ENCODE measurements at regions of chr4 and their contacts with region 1.

Region 1: DNA sequence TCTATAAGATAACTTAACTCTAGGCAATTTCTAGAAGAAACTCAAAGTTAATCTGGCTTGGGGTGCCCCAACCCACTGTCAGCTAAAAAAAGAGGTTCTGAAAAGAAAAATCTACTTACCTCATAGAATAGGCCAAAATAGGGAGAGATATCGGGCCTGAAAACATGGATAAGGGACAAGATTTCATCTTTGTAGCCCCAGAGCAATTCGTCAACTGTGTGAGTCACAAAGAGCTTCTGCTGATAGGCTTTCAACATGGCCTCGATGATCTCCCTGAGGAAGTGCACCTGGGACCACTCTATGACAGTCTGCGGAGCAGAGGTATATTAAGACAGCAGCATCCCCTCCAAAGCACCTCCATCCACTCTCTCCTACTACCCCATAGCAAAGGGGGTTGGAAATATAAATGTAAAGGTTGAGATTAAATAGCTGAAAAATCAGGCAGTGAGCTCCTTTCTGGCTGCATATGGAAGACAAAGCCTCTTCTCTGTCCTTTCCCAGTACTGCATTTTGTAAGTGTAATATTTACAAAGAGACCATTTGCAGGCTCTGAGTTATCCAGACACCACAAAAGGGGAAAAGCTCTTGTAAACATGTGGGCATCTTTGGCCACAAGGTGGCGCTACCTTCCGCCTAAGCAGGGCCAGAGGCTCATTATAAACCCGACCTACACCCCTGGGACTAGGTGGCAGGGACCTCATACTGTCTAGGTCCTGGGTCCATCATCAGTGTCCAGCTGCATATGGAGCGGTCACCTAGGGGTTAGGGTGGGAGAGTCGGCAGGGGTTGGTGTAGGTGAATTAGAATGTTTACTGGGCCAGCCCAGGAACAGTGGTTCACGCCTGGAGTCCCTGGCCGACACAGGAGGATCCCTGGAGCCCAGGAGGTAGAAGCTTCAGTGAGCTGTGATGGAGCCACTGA is 31.5 kb upstream of the NUP54 start:
- DNase-seq: peak; percentile 62
- ATAC-seq: peak; percentile 79
- H3K4me3 Mint-ChIP-seq: no peak overlapping the region
- H3K27ac Mint-ChIP-seq: no peak overlapping the region
- H3K4me1 Mint-ChIP-seq: peaks cover 5% of the 10 kb centered on the region
- H3K27me3 Mint-ChIP-seq: no peaks in the 10 kb centered on the region
- CTCF ChIP-seq: peak; percentile 76

Region 2: DNA sequence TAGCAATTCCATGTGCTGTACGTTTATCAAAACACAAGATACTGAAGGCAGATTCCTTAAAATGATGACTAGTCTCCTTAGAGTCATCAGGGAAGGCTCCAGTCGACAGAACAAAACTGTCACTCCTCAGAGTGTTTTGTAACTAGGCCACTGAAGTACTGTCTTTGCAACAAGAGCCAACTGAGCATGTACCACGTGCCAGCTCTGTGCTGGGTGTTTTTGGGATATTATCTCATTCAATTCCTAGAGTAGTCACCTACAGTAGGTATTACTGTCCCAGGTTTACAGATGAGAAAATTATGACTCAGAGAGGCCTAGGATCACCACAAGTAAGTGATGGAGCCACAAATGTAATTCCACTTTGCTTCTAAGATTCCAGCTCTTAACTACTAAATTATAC is 13.2 kb before region 1 on chr4:
- CTCF ChIA-PET with region 1: interaction called, 10 read pairs
- POLR2A ChIA-PET with region 1: no interaction called
- intact Hi-C with region 1: no loop called
- DNase-seq: no peak
- ATAC-seq: no peak
- H3K4me3 Mint-ChIP-seq: no peak overlapping the region
- H3K27ac Mint-ChIP-seq: no peak overlapping the region
- H3K4me1 Mint-ChIP-seq: no peaks in the 10 kb centered on the region
- H3K27me3 Mint-ChIP-seq: no peaks in the 10 kb centered on the region
- CTCF ChIP-seq: no peak

Region 3: GRCh38 chr4:76213415-76214176 is 33.9 kb after region 1 on chr4 and contains the start of gene SCARB2:
- CTCF ChIA-PET with region 1: interaction called, 11 read pairs
- POLR2A ChIA-PET with region 1: no interaction called
- intact Hi-C with region 1: loop called (anchors 2 kb)
- DNase-seq: peak; percentile 83
- ATAC-seq: peak; percentile 80
- H3K4me3 Mint-ChIP-seq: peak within 1 kb of the TSS; percentile 91
- H3K27ac Mint-ChIP-seq: peak within 1 kb of the TSS; percentile 90
- H3K4me1 Mint-ChIP-seq: peaks cover 51% of the 10 kb centered on the region
- H3K27me3 Mint-ChIP-seq: no peaks in the 10 kb centered on the region
- CTCF ChIP-seq: no peak
- total RNA-seq, gene SCARB2: 17.2 and 21.8 TPM in 2 replicates

Region 4: DNA sequence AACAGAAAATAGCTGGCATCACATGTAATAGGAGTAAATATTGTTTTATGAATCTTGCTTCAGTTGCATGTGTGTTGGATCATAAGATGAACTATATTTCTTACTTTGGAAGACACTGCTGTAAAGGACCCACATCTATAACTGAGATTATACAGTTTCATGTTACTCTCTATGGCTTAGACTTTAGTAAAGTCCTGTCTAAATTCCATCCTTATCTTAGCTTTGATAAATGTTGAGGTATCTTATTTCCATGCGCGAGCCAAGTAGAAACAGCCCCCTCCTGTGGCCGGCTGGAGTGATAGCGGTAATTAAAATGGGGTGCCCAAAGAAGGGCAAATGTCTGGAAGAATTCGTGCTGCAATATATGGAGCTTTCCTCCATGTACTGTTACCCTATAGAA is 198.3 kb after region 1 on chr4:
- CTCF ChIA-PET with region 1: interaction called, 40 read pairs
- POLR2A ChIA-PET with region 1: no interaction called
- intact Hi-C with region 1: loop called (anchors 1 kb)
- DNase-seq: no peak
- ATAC-seq: no peak
- H3K4me3 Mint-ChIP-seq: no peak overlapping the region
- H3K27ac Mint-ChIP-seq: no peak overlapping the region
- H3K4me1 Mint-ChIP-seq: no peaks in the 10 kb centered on the region
- H3K27me3 Mint-ChIP-seq: peaks cover 5% of the 10 kb centered on the region
- CTCF ChIP-seq: no peak

Region 5: DNA sequence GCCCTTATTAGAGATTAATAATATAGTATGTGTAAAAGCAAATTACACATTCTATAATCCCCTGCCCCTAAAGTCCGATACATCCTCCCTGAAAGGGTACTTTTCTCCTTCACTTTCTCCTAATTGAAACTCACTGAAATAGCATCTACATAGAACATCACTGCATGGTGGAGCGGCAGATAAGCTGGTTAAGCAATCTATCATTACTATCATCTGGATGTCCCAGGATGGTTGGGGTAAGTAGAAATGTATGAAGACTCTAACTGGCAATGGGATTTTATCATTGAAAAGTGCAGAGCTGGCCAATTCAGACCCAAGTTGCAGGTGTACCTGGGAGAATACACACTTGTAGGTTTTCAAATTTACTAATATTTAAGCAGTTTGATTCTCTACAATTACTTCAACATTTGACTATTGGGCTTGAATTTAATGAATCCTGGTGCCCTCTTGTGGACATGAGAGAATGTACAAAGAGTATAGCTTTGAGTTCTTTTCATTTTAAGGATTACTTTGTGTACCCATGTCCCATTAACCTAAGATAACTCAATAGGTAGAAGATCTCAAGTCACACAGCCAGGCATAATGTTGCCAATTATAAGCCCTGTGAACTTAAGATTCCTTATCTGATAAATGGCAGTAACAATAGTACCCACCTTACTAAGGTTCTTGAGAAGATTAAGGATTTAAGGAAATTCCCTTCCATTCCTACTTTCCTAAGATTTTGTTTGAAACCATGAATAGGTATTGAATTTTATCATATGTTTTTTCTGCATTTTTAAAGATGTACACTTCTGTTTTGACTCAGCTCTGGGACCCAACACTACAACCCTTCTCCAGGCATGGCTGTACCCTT is 325.2 kb after region 1 on chr4:
- CTCF ChIA-PET with region 1: interaction called, 69 read pairs
- POLR2A ChIA-PET with region 1: no interaction called
- intact Hi-C with region 1: loop called (anchors 1 kb)
- DNase-seq: no peak
- ATAC-seq: peak; percentile 45
- H3K4me3 Mint-ChIP-seq: no peak overlapping the region
- H3K27ac Mint-ChIP-seq: no peak overlapping the region
- H3K4me1 Mint-ChIP-seq: peaks cover 11% of the 10 kb centered on the region
- H3K27me3 Mint-ChIP-seq: no peaks in the 10 kb centered on the region
- CTCF ChIP-seq: no peak

Region 6: GRCh38 chr4:76570141-76570973 is 390.7 kb after region 1 on chr4:
- CTCF ChIA-PET with region 1: no interaction called
- POLR2A ChIA-PET with region 1: no interaction called
- intact Hi-C with region 1: no loop called
- DNase-seq: no peak
- ATAC-seq: no peak
- H3K4me3 Mint-ChIP-seq: no peak overlapping the region
- H3K27ac Mint-ChIP-seq: no peak overlapping the region
- H3K4me1 Mint-ChIP-seq: no peaks in the 10 kb centered on the region
- H3K27me3 Mint-ChIP-seq: peaks cover 12% of the 10 kb centered on the region
- CTCF ChIP-seq: no peak

Region 7: DNA sequence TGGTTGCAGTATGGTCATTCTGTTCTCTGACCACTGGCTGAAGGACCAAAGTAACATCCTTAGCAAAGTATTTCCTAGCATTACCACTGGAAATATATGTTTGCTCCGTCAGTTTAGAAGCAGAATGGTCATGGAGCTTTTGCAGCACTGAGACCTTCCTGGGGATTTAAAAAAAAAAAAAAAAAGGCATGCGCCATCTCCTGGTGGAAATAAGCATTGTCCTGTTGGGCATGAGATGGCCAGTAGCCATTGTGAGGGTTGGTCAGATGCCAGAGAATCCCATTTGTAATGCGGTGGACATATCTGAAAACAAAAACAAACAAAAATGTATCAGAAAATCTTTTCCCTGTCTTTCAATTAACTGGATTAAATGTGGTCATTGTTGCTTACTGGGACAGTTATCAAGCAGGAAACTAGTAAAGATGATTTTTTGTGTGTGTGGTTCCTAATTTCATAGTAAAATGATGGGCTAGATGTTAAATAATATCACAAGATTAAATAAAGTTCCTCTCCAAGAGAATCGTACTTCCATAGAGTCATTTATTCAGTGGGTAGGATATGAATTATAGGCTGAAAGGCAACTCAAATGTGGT is 578.7 kb after region 1 on chr4:
- CTCF ChIA-PET with region 1: no interaction called
- POLR2A ChIA-PET with region 1: no interaction called
- intact Hi-C with region 1: loop called (anchors 2 kb)
- DNase-seq: no peak
- ATAC-seq: no peak
- H3K4me3 Mint-ChIP-seq: no peak overlapping the region
- H3K27ac Mint-ChIP-seq: no peak overlapping the region
- H3K4me1 Mint-ChIP-seq: no peaks in the 10 kb centered on the region
- H3K27me3 Mint-ChIP-seq: no peaks in the 10 kb centered on the region
- CTCF ChIP-seq: peak; percentile 67